Activated B cell treated with CpG ODN at 0.5 μM for 24 hours (primary cell): ENCODE measurements at regions of chr6 and their contacts with region 1.

Region 1: DNA sequence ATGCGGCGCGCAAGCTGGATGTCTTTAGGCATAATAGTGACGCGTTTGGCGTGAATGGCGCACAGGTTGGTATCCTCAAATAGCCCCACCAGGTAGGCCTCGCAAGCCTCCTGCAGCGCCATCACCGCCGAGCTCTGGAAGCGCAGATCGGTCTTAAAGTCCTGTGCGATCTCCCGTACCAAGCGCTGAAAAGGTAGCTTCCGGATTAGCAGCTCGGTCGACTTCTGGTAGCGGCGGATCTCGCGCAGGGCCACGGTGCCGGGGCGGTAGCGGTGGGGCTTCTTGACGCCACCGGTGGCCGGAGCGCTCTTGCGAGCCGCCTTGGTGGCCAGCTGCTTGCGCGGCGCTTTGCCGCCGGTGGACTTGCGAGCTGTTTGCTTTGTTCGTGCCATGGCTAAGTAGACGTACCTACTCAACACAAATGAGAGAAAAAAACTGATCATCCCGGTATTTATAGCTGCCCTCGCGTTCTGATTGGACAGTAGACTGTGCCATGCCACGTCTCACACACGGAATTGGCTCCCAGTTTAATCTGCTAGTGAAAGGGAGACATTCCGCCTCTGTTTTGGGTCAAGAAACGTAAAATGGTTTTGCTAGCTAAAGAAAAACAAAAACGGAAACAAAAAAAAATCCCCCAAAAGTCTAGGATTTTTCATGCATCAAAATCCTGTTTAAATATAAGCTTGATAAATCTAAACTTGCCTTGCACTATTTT is 40.1 kb downstream of the OR2B2 start:
- DNase-seq: peak; percentile 73
- ATAC-seq: peak; percentile 80
- H3K4me3 Mint-ChIP-seq: peak overlapping the region; percentile 94
- H3K27ac Mint-ChIP-seq: peak overlapping the region; percentile 95
- H3K4me1 Mint-ChIP-seq: peaks cover 36% of the 10 kb centered on the region
- H3K27me3 Mint-ChIP-seq: no peaks in the 10 kb centered on the region
- CTCF ChIP-seq: no peak

Region 2: DNA sequence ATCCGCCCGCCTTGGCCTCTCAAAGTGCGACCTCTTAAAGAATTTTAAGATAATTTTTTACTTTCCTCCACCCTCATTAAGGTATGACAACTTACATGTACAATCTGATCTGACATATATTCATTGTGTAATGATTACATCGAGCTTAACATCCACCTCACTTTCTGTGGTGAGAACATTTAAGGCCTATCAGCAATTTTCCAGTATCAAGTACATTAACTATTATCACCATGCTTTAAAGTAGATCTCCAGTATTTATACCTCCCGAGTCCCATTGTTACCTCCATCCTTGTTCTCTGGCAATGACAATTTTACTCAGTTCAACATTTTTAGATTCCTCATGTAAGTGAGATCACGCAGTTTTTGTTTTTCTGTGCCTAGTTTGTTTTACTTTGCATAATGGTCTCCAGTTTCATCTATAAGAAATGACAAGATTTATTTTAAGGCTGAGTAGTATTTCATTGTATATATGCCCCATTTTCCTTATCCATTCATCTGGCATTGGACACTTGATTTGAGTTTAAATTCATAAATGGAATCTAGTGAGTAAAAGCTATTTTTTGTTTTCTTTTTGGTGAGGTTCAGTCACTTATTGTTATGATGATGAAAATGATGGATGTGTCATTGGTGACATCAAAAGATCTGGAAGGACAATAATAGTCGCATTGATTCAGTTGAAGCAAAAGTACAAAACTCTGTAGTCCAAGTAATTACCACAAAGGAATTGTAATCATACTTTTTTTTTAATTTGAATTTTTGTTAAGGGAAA is 46.9 kb before region 1 on chr6:
- CTCF ChIA-PET with region 1: no interaction called
- POLR2A ChIA-PET with region 1: interaction called, 1,167 read pairs
- intact Hi-C with region 1: no loop called
- DNase-seq: no peak
- ATAC-seq: no peak
- H3K4me3 Mint-ChIP-seq: peak overlapping the region; percentile 96
- H3K27ac Mint-ChIP-seq: peak overlapping the region; percentile 99
- H3K4me1 Mint-ChIP-seq: peaks cover 31% of the 10 kb centered on the region
- H3K27me3 Mint-ChIP-seq: no peaks in the 10 kb centered on the region
- CTCF ChIP-seq: no peak

Region 3: DNA sequence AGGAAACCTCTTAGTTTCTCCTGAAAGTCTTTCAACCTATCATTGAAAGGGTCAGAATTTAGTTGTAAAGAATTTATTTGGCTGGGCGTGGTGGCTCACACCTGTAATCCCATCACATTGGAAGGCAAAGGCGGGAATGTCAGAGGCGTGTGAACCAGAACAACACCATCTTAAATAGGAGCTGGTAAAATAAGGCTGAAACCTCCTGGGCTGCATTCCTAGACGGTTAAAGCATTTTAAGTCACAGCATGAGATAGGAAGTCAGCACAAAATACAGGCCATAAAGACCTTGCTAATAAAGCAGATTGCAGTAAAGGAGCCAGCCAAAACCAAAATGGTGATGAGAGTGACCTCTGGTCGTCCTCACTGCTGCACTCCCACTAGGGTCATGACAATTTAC is 10.5 kb after region 1 on chr6:
- CTCF ChIA-PET with region 1: no interaction called
- POLR2A ChIA-PET with region 1: interaction called, 223 read pairs
- intact Hi-C with region 1: no loop called
- DNase-seq: no peak
- ATAC-seq: no peak
- H3K4me3 Mint-ChIP-seq: no peak overlapping the region
- H3K27ac Mint-ChIP-seq: no peak overlapping the region
- H3K4me1 Mint-ChIP-seq: no peaks in the 10 kb centered on the region
- H3K27me3 Mint-ChIP-seq: no peaks in the 10 kb centered on the region
- CTCF ChIP-seq: no peak